ENCODE measurements at regions of chr15 and their contacts with region 1.

Region 1: GRCh38 chr15:95843241-95843910 is 487.1 kb upstream of the NR2F2 start:
- DNase-seq: peak in 4 of 5 donors; percentile 33 to 62 (median 48)
- ATAC-seq: peak; percentile 68 to 81 (median 75)
- H3K4me3 ChIP-seq: no peak overlapping the region
- H3K27ac ChIP-seq: peak overlapping the region in 9 of 12 donors; percentile 9 to 69 (median 48)
- H3K4me1 ChIP-seq: peaks cover 0 to 21% (median 2%) of the 10 kb centered on the region in 12 donors
- H3K27me3 ChIP-seq: no peaks in the 10 kb centered on the region
- CTCF ChIP-seq: no peak
- POLR2A ChIP-seq: no peak

Region 2: GRCh38 chr15:95277266-95277665 is 566.1 kb before region 1 on chr15:
- intact Hi-C with region 1: loop called in 1 of 10 experiments (anchors 10 kb)
- DNase-seq: no peak
- ATAC-seq: no peak
- H3K4me3 ChIP-seq: no peak overlapping the region
- H3K27ac ChIP-seq: peak overlapping the region in 9 of 12 donors; percentile 5 to 65 (median 31)
- H3K4me1 ChIP-seq: peaks cover 0 to 13% (median 0%) of the 10 kb centered on the region in 12 donors
- H3K27me3 ChIP-seq: no peaks in the 10 kb centered on the region
- CTCF ChIP-seq: no peak
- POLR2A ChIP-seq: no peak

Region 3: DNA sequence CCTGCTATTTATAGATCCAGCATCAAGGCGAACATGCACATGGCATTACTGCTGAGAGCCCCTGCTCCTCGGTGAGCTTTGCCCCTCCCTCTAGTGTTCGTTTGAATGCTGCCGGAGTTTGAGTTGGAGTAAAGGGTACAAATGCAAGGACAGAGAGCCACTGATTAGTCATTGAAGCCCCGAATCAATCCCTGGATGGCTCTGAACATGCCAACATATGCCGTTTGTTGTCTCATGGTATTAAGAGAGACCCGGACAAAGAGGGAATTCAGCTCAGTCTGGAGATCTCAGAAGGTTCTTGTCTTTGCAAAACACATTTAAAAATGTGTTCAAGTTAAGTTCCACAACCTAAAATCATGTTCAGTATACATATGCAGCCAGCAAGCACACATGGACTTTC is 302.1 kb before region 1 on chr15:
- intact Hi-C with region 1: no loop called
- DNase-seq: no peak
- ATAC-seq: no peak
- H3K4me3 ChIP-seq: no peak overlapping the region
- H3K27ac ChIP-seq: no peak overlapping the region
- H3K4me1 ChIP-seq: no peaks in the 10 kb centered on the region
- H3K27me3 ChIP-seq: no peaks in the 10 kb centered on the region
- CTCF ChIP-seq: no peak
- POLR2A ChIP-seq: no peak

Region 4: GRCh38 chr15:95604634-95605036 is 238.7 kb before region 1 on chr15:
- intact Hi-C with region 1: loop called in 2 of 10 experiments (anchors 10 kb)
- DNase-seq: peak in 2 of 5 donors; percentile 27 to 59
- ATAC-seq: peak in 2 of 4 donors; percentile 62 to 69
- H3K4me3 ChIP-seq: no peak overlapping the region
- H3K27ac ChIP-seq: peak overlapping the region in 8 of 12 donors; percentile 30 to 74 (median 54)
- H3K4me1 ChIP-seq: peaks cover 0 to 25% (median 7%) of the 10 kb centered on the region in 12 donors
- H3K27me3 ChIP-seq: no peaks in the 10 kb centered on the region
- CTCF ChIP-seq: no peak
- POLR2A ChIP-seq: no peak

Region 5: GRCh38 chr15:95659656-95660055 is 183.7 kb before region 1 on chr15:
- intact Hi-C with region 1: loop called in 3 of 10 experiments (anchors 5 to 10 kb)
- DNase-seq: peak in 4 of 5 donors; percentile 40 to 52 (median 51)
- ATAC-seq: peak in 2 of 4 donors; percentile 71
- H3K4me3 ChIP-seq: no peak overlapping the region
- H3K27ac ChIP-seq: peak overlapping the region in 10 of 12 donors; percentile 6 to 69 (median 52)
- H3K4me1 ChIP-seq: peaks cover 0 to 3% (median 0%) of the 10 kb centered on the region in 12 donors
- H3K27me3 ChIP-seq: no peaks in the 10 kb centered on the region
- CTCF ChIP-seq: no peak
- POLR2A ChIP-seq: no peak

Region 6: DNA sequence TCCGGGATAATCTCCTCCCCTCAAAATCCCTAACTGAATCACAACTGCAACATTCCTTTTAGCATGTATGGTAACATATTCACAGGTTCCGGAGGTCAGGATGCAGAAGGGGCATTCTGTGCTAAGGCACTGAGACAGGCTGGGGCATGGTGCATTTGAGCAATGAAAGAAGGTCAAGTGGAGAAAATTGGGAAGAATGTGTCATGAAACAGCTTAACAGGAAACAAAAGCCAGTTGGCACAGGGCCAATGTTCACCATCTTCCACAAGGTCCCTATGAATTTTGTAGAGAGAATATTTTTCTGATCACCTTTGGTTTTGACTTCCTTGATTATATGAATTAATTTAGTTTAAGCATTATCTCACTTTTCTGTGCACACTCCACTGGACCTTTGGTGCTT is 100.5 kb before region 1 on chr15:
- intact Hi-C with region 1: no loop called
- DNase-seq: peak in 1 of 5 donors; percentile 26
- ATAC-seq: no peak
- H3K4me3 ChIP-seq: no peak overlapping the region
- H3K27ac ChIP-seq: no peak overlapping the region
- H3K4me1 ChIP-seq: peaks cover 0 to 3% (median 0%) of the 10 kb centered on the region in 12 donors
- H3K27me3 ChIP-seq: no peaks in the 10 kb centered on the region
- CTCF ChIP-seq: no peak
- POLR2A ChIP-seq: no peak

Region 7: GRCh38 chr15:95760501-95760900 is 82.9 kb before region 1 on chr15:
- intact Hi-C with region 1: loop called in 1 of 10 experiments (anchors 10 kb)
- DNase-seq: peak in 1 of 5 donors; percentile 24
- ATAC-seq: no peak
- H3K4me3 ChIP-seq: no peak overlapping the region
- H3K27ac ChIP-seq: no peak overlapping the region
- H3K4me1 ChIP-seq: peaks cover 0 to 9% (median 0%) of the 10 kb centered on the region in 12 donors
- H3K27me3 ChIP-seq: no peaks in the 10 kb centered on the region
- CTCF ChIP-seq: no peak
- POLR2A ChIP-seq: no peak

Region 8: GRCh38 chr15:96327155-96327741 is 483.9 kb after region 1 on chr15:
- intact Hi-C with region 1: loop called in 2 of 10 experiments (anchors 10 kb)
- DNase-seq: no peak
- ATAC-seq: peak; percentile 28 to 64 (median 41)
- H3K4me3 ChIP-seq: peak overlapping the region; percentile 32 to 91 (median 72)
- H3K27ac ChIP-seq: peak overlapping the region; percentile 66 to 90 (median 82)
- H3K4me1 ChIP-seq: peaks cover 0 to 32% (median 5%) of the 10 kb centered on the region in 12 donors
- H3K27me3 ChIP-seq: peaks cover 0 to 87% (median 39%) of the 10 kb centered on the region in 9 donors
- CTCF ChIP-seq: peak; percentile 42 to 83 (median 70)
- POLR2A ChIP-seq: no peak